ENCODE measurements at regions of chr17 and their contacts with region 1.

Region 1: DNA sequence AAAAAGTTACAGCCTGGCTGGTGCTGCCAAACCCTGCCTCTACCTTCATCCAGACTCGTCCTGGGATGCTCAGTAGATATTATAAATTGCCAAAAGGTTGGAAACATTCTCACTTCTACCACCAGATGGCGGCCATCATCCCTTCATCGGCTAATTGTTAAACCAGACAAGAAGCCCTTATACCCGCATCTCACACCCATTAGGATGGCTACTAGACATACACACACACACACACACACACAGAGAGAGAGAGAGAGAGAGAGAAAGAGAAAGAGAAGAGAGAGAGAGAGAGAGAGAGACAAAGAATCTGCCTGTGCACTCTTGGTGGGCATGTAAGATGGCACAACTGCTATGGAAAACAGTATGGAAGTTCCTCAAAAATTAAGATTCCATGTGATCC is 15.0 kb upstream of the SCIMP start:
- DNase-seq: peak; percentile 49
- H3K4me3 Mint-ChIP-seq: no peak overlapping the region
- H3K27ac Mint-ChIP-seq: no peak overlapping the region
- H3K4me1 Mint-ChIP-seq: peaks cover 5% of the 10 kb centered on the region
- H3K27me3 Mint-ChIP-seq: no peaks in the 10 kb centered on the region

Region 2: DNA sequence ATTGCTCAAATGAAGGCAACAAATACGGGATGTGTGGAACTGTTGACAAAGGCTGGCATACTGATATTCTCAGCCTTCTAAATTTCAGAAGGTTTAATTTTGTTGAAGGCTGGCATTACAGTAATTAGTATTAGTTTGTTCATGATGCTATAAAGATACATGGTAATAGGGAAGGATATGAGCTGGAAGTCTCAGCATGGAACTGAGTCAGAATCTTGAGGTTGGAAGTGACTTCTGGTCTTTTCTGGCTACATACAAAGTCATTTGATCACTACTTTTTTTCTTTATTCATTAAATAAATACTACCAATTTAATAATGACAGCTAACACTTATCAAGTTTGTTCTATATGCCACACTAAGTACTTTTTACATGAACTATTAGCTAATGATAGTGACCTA is 55.0 kb after region 1 on chr17:
- intact Hi-C with region 1: loop called (anchors 2 kb)
- DNase-seq: no peak
- H3K4me3 Mint-ChIP-seq: no peak overlapping the region
- H3K27ac Mint-ChIP-seq: no peak overlapping the region
- H3K4me1 Mint-ChIP-seq: peaks cover 12% of the 10 kb centered on the region
- H3K27me3 Mint-ChIP-seq: no peaks in the 10 kb centered on the region